PC-3 (cell line): ENCODE measurements at regions of chr2 and their contacts with region 1.

Region 1: DNA sequence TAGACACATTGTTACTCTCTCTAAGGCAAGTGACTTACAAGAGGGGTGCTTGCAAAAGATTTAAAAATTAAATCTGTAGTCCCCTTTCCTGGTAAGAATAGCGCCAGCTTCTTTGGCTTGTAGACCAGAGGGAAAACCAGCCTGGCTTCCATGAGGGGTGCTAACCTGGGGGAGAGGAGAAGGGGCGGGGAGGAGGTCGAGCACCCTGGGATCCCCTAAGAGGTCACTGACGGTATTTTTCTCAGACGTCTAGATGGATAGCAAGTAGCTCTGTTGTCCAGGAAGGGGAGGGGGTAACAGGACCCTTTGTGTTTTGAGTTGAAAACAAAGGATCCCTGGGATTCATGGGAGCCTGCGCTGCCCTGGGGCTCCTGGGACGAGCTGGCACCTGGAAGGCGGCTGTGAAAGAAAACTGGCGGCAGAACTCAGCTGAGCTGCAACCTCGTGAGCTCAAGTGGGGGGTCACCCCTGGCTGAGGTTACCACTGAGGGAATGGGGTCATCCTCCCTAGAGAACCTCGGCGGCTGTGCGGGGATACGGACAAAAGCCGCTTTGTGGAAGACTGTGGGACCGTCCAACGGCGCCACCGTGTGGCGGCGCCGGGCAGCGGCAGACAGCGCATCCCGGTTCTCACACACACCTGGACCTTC is 37.8 kb upstream of the MRPL19 start:
- DNase-seq: peak; percentile 80
- ATAC-seq: peak; percentile 52
- H3K4me3 ChIP-seq: peak overlapping the region; percentile 53; the same call in 1 of the 2 replicates
- H3K27ac ChIP-seq: peak overlapping the region; percentile 93; the same call in 1 of the 2 replicates
- H3K4me1 ChIP-seq: peaks cover 60% of the 10 kb centered on the region
- H3K27me3 ChIP-seq: no peaks in the 10 kb centered on the region
- CTCF ChIP-seq: peak; percentile 96

Region 2: DNA sequence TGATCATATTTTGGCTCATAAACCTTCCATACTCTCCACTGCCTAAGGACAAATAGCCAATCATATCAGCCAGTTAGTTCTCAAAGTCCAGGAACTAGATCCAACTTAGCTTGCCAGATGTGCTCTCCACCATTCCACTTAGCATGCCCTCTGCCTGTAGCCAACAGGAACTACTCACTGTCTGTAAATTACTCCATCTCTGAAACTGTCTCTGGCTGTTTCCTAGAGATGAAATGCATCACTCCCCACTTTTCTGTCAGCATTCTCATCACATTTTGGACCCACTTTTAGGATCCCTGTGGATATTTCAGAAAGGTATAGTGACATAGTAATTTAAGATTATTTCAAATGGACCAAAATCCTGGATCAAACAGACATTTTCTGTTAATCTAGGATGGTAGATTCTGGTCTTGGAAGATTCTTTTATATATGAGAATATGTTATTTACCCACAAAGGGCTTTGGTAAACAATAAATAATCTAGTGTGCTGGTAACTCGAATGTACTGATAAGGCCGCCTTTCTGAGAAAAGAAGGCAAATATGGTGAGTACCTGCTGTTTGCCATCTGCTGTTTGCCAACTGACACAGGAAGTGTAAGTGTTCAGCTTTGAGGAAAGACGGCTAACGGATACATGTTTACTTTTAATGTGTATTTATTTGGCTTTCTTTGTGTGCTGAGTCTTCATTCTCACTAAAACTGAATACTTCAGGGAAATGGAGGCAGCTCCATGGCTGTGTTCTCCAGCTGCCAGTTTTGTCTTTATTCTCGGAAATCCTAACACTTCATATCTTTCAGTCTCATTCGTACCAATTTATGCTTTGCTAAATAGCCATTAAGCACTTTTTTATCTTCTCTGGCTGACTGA is 127.6 kb before region 1 on chr2:
- CTCF ChIA-PET with region 1: no interaction called
- POLR2A ChIA-PET with region 1: no interaction called
- intact Hi-C with region 1: loop called (anchors 5 kb)
- DNase-seq: peak; percentile 32
- ATAC-seq: peak; percentile 66; the same call in 1 of the 2 replicates
- H3K4me3 ChIP-seq: no peak overlapping the region
- H3K27ac ChIP-seq: no peak overlapping the region
- H3K4me1 ChIP-seq: 0 out of 2 replicates have a peak, but pooled peaks cover 6% of the 10 kb centered on the region
- H3K27me3 ChIP-seq: no peaks in the 10 kb centered on the region
- CTCF ChIP-seq: peak; percentile 58

Region 3: GRCh38 chr2:75560768-75561565 is 47.8 kb before region 1 on chr2 and contains the start of gene EVA1A:
- CTCF ChIA-PET with region 1: interaction called, 11 read pairs
- POLR2A ChIA-PET with region 1: interaction called, 6 read pairs
- intact Hi-C with region 1: loop called (anchors 1 kb)
- DNase-seq: peak; percentile 72
- ATAC-seq: peak; percentile 70
- H3K4me3 ChIP-seq: peak within 1 kb of the TSS; percentile 86
- H3K27ac ChIP-seq: peak within 1 kb of the TSS; percentile 48
- H3K4me1 ChIP-seq: peaks cover 25% of the 10 kb centered on the region
- H3K27me3 ChIP-seq: no peaks in the 10 kb centered on the region
- CTCF ChIP-seq: no peak
- total RNA-seq, gene EVA1A: 48.9 and 70.8 TPM in 2 replicates

Region 4: GRCh38 chr2:75587954-75588587 is 20.7 kb before region 1 on chr2:
- CTCF ChIA-PET with region 1: interaction called, 12 read pairs
- POLR2A ChIA-PET with region 1: interaction called, 3 read pairs
- intact Hi-C with region 1: loop called (anchors 1 kb)
- DNase-seq: peak; percentile 85
- ATAC-seq: peak; percentile 85
- H3K4me3 ChIP-seq: peak overlapping the region; percentile 36
- H3K27ac ChIP-seq: peak overlapping the region; percentile 74
- H3K4me1 ChIP-seq: peaks cover 41% of the 10 kb centered on the region
- H3K27me3 ChIP-seq: no peaks in the 10 kb centered on the region
- CTCF ChIP-seq: no peak

Region 5: DNA sequence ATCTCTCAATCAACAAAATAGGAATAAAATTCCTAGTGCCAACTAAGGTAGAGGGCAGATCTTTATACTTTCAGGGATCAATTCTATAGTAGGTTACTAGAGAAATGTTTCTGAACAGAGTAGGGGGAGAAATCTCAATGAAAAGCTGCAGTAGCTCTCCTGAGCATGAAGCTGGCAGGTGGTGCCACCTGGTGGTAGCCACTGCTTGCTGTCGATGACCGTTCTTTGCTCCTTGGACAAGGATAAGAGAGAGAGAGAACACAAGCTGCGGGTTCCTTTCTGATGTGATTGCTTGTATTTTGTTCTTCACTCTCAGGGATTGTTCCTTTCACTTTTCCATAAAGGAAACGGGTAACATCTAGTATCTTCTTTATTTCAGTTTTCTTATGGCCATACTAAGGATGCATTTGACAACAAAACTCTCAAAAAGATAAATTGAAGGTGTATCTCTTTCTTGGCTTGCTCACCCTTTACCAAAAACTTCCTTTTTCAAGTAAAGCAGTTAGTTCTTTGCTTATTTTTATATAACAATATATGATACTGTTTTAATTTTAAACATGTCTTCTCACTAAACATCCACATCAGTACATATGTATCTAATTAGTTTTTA is 19.2 kb after region 1 on chr2:
- CTCF ChIA-PET with region 1: interaction called, 7 read pairs
- POLR2A ChIA-PET with region 1: no interaction called
- intact Hi-C with region 1: loop called (anchors 1 kb)
- DNase-seq: peak; percentile 90
- ATAC-seq: peak; percentile 96
- H3K4me3 ChIP-seq: no peak overlapping the region
- H3K27ac ChIP-seq: no peak overlapping the region
- H3K4me1 ChIP-seq: no peaks in the 10 kb centered on the region
- H3K27me3 ChIP-seq: no peaks in the 10 kb centered on the region
- CTCF ChIP-seq: peak; percentile 96

Region 6: DNA sequence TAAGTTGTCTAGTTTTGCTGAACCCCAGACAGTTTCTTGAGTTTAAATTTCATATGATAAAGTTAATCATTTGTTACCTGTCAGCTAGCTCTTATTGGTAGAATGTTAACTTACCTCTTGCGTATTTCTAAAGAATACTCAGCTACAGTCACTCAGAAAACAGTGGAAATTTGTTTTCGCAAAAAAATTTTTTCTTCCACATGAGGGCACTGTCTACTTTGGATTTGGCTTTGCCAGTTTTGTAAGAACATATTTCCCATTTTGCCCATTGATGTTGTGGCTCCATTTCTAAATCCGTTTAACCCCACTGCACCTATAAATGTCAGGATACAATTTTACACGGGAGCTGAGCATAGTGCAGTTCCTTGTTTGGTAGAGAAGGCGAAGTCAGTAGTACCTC is 121.1 kb after region 1 on chr2:
- CTCF ChIA-PET with region 1: no interaction called
- POLR2A ChIA-PET with region 1: no interaction called
- intact Hi-C with region 1: no loop called
- DNase-seq: peak; percentile 66
- ATAC-seq: no peak
- H3K4me3 ChIP-seq: no peak overlapping the region
- H3K27ac ChIP-seq: no peak overlapping the region
- H3K4me1 ChIP-seq: no peaks in the 10 kb centered on the region
- H3K27me3 ChIP-seq: peaks cover 23% of the 10 kb centered on the region
- CTCF ChIP-seq: peak; percentile 73